Activated CD4-positive, alpha-beta T cell treated with anti-CD3 and anti-CD28 coated beads, Interleukin-2, amount 10 ng/mL, durations not matched to agents 24 days and 14 days (primary cell): ENCODE measurements at regions of chr10 and their contacts with region 1.

Region 1: DNA sequence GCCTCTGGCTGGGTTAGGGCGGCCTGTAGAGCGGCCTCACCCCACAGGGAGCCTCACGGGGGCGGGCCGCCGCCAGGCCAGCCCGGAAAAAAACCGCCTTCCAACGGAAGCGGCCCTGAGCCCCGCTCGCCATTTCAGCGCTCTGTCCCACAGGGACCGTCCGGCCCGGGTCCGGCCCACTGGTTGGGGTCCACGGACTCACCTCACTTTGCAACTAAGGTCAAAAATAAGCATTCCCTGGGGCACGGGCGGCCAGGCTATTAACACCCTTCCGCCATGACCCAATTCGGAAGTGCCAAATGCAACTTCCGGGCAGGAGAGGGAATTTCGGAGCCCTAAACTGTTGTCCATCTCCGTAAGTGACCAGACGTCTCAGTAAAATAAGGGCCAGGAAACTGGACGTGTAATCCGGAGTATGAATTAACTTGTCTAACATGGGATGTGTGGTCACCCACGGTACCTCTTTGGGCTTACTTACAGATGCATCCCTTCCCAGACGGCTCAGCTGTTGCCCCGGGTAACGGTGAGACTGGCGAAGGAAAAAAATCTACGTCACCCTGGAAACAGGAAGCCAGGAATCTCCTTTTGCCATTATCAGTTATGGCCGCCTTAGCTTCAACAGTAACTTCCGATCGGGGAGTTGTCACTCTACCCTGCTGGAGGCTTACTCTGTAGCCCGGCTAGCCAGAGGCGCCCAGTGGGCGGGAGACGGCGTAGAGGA is at the start of gene BBIP1:
- DNase-seq: no peak
- H3K4me3 Mint-ChIP-seq: peak within 1 kb of the TSS; percentile 91
- H3K27ac Mint-ChIP-seq: peak within 1 kb of the TSS; percentile 99
- H3K4me1 Mint-ChIP-seq: peaks cover 36% of the 10 kb centered on the region
- H3K27me3 Mint-ChIP-seq: no peaks in the 10 kb centered on the region
- total RNA-seq, gene BBIP1: 26.3 and 31.1 TPM in 2 replicates

Region 2: GRCh38 chr10:110502851-110503301 is 415.9 kb before region 1 on chr10:
- intact Hi-C with region 1: loop called (anchors 2 kb)
- DNase-seq: peak; percentile 84
- H3K4me3 Mint-ChIP-seq: peak overlapping the region; percentile 99
- H3K27ac Mint-ChIP-seq: peak overlapping the region; percentile 92
- H3K4me1 Mint-ChIP-seq: peaks cover 78% of the 10 kb centered on the region
- H3K27me3 Mint-ChIP-seq: no peaks in the 10 kb centered on the region

Region 3: GRCh38 chr10:110567201-110568054 is 351.4 kb before region 1 on chr10 and contains the start of gene SMC3:
- intact Hi-C with region 1: loop called (anchors 1 kb)
- DNase-seq: peak; percentile 98
- H3K4me3 Mint-ChIP-seq: peak within 1 kb of the TSS; percentile 97
- H3K27ac Mint-ChIP-seq: peak within 1 kb of the TSS; percentile 98
- H3K4me1 Mint-ChIP-seq: peaks cover 32% of the 10 kb centered on the region
- H3K27me3 Mint-ChIP-seq: peaks cover 21% of the 10 kb centered on the region
- total RNA-seq, gene SMC3: 82.2 and 87.3 TPM in 2 replicates

Region 4: DNA sequence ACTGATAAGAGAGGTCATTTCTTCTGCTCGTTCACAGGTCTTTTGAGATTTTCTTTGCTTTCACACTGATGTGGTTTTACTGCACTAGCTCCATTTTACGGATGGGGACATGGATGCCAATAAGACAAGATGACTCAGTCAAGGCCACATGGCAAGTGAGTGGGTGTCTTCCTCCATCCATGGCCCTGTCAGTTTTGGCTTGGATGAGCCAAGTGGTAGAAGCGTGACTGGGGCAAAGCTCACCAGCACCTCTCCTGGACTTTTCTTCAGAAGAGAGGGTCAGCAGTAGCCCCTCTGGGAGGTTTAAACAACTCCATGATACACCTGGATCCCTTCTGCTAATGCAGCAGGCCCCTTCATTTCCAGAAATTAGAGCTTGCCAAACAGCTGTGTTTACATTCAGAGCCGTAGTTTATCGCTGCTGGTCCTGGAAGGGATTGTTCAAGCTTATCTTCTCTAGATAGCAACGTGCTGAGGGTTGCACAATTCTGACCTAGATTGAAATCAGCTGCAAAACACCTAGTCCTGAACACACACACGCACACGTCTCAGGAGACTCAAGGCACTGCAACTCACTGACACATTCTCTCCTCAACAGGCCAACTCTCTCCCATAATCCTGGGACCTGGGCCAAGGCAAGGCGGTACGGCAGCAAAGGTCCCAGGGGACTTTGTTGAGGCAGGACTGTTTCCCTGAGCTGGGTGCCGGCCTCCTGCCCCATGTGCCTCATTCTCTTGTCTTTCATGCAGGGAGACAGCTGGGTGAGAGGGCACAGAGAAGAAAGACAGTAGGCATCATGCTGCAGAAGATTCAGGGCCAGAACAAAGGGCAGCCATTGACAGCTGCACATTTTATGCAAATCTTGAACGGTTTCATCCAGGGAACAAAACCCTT is 61.3 kb before region 1 on chr10:
- intact Hi-C with region 1: no loop called
- DNase-seq: peak; percentile 69
- H3K4me3 Mint-ChIP-seq: peak overlapping the region; percentile 44
- H3K27ac Mint-ChIP-seq: peak overlapping the region; percentile 87
- H3K4me1 Mint-ChIP-seq: peaks cover 66% of the 10 kb centered on the region
- H3K27me3 Mint-ChIP-seq: no peaks in the 10 kb centered on the region

Region 5: DNA sequence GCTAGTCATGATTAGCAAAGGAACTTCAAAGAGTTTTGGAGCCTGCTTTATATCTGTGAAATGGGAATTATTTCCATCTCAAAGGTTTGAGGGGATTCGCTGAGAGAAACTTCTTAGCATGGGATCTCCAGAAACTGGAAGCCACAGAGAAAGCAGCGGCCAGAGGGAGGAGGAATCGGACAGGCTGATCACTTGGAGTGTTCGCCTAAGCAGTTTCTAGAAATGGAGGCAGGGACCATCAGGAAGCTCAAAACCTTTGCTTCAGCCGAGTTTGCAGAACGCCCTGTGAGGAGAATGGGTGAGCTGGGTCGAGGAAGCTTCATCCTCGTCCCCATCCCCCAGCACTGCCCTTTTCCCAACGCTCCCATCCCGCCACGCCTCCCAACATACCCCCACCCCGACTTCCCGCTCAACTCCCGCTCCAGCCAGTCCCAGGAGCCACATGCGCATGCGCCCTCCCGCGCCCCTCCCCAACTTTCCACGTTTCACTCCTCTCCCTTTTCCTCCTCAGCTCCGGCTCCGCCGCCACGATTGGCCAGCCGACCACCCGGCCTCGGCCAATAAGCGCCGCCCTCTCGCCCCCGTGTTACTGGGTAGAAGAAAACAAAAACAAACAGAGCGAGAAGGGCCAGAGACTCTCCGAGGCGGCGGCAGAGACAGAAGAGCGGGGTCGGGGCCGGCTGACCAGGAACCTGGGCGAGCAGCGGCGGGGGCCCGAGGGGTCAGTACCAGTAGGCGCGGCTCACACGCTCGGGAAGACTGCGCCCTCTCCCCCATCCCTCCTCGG is 47.3 kb before region 1 on chr10 and contains the start of gene PDCD4:
- intact Hi-C with region 1: loop called (anchors 1 kb)
- DNase-seq: peak; percentile 99
- H3K4me3 Mint-ChIP-seq: peak within 1 kb of the TSS; percentile 88
- H3K27ac Mint-ChIP-seq: peak within 1 kb of the TSS; percentile 95
- H3K4me1 Mint-ChIP-seq: peaks cover 55% of the 10 kb centered on the region
- H3K27me3 Mint-ChIP-seq: no peaks in the 10 kb centered on the region
- total RNA-seq, gene PDCD4: 45.2 and 53.6 TPM in 2 replicates

Region 6: DNA sequence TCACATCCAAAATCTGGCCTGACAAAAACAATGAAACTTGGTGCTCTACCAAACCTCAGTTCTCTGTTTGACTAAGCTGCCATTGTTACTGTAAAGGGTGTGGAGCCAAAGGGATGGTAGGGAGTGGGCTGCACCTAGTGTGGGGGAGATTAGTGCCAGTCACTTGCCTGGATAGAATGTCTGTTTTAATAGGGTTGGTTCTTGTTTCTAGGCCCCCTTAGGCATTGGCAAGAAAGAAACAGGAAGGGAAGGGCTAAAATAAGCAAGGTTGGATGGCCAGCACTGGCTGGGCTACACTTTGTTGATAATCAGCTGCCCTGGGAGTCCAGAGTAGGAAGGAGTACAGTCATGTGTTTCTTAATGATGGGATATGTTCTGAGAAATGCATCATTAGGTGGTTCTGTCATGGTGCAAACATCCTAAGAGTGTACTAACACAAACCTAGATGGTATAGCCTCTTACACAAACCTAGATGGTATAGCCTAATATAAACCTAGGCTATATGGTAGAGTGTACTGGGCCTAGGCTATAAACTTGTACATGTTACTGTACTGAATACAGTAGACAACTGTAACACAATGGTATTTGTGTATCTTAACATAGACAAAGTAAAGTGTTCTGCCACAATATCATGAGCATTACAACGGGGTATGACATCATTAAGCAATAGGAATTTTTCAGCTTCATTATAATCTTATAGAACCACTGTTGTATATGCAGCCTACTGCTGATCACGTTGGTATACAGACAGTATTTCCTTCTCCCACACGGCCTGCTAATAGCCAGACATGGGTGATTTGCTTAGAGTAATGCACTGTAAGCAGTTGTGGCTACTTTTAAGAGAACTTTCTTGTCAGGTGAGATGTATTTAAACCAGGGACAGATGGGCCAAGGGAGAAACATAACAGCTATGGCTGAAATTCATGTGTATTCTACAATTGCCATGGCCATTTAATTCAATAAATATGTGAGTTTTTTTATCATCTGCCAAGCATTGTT is 15.2 kb before region 1 on chr10:
- intact Hi-C with region 1: loop called (anchors 1 kb)
- DNase-seq: no peak
- H3K4me3 Mint-ChIP-seq: no peak overlapping the region
- H3K27ac Mint-ChIP-seq: peak overlapping the region; percentile 25
- H3K4me1 Mint-ChIP-seq: peaks cover 22% of the 10 kb centered on the region
- H3K27me3 Mint-ChIP-seq: no peaks in the 10 kb centered on the region

Region 7: GRCh38 chr10:110993024-110993693 is 74.4 kb after region 1 on chr10:
- intact Hi-C with region 1: loop called (anchors 1 kb)
- DNase-seq: peak; percentile 79
- H3K4me3 Mint-ChIP-seq: peak overlapping the region; percentile 66
- H3K27ac Mint-ChIP-seq: peak overlapping the region; percentile 18
- H3K4me1 Mint-ChIP-seq: peaks cover 21% of the 10 kb centered on the region
- H3K27me3 Mint-ChIP-seq: no peaks in the 10 kb centered on the region